ENCODE measurements at regions of chr5 and their contacts with region 1.

Region 1: GRCh38 chr5:135191084-135191826 is 157.2 kb upstream of the PITX1 start:
- DNase-seq: peak; percentile 62 to 80
- ATAC-seq: peak; percentile 97 to 99
- H3K4me3 ChIP-seq: peak overlapping the region; percentile 60
- H3K27ac ChIP-seq: peak overlapping the region; percentile 78 to 90
- H3K4me1 ChIP-seq: peaks cover 13% of the 10 kb centered on the region; the same call in 2 of the 3 replicates
- CTCF ChIP-seq: peak; percentile 94
- EP300 ChIP-seq: no peak
- POLR2A ChIP-seq: no peak
- RAD21 ChIP-seq: peak; percentile 97 to 99

Region 2: DNA sequence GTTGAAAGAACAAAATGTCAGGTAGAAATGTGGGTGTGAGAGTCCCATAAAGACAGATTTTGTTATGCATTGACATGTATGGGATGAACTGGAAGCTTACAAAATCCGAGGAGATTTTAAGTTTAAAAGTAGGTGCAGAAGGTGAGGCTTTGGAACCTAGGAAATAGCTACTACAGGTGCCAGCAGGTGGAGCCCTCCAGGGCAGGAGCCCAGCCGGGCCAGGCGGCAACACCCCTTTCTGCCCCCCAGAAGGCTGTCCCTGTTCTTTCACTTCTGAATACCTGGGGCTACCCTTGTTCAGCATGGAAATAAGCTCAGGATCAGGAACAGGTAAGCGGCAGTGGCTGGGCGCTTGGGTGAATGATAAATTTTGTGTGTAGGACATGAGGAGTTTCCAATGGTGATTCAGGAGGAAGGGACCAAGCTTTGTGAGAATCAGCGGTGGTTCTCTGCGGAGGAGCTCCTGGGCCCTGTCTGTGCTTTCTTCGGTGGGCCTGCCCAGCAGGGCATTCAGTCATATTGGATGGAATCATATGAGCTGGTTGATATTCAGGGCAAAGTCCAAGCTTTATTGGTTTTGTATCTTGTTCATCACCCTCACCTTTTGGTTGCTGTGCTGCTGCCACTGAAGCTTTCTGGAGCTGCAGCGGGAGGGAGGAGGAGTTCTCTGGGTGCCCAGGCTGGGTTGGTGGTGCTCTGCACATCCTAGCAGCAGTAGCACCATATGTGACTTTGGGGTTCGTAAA is 274.0 kb before region 1 on chr5:
- CTCF ChIA-PET with region 1: interaction called, 60 read pairs
- POLR2A ChIA-PET with region 1: no interaction called
- DNase-seq: peak in 1 of 2 experiments; percentile 16
- ATAC-seq: peak in 1 of 2 experiments; percentile 74; a peak in 3 of 6 replicates
- H3K4me3 ChIP-seq: no peak overlapping the region
- H3K27ac ChIP-seq: no peak overlapping the region
- H3K4me1 ChIP-seq: no peaks in the 10 kb centered on the region
- CTCF ChIP-seq: peak; percentile 46
- EP300 ChIP-seq: no peak
- POLR2A ChIP-seq: no peak
- RAD21 ChIP-seq: peak; percentile 40 to 50; a peak in 4 of 5 replicates

Region 3: DNA sequence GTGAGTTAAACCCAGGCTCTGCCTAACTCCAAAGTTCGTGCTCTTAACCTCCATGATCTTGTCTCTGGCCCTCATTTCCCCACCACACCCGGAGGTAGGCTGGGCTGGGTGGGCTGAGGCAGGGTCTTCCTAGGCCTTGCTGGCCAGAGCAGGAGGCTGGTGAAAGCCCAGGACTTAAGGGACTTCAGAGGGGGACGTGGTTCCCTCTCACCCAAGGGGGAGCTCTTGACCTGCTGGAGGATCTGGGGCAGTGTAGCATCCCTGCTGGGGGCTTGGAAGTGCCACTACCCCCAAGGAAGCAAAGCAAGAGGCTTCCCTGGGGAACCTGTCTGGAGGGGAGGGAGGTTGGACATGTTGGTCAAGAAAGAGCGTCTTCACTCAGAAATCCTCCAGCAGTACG is 171.9 kb before region 1 on chr5:
- CTCF ChIA-PET with region 1: interaction called, 29 read pairs
- POLR2A ChIA-PET with region 1: no interaction called
- DNase-seq: no peak
- ATAC-seq: peak in 1 of 2 experiments; percentile 55; a peak in 1 of 6 replicates
- H3K4me3 ChIP-seq: no peak overlapping the region
- H3K27ac ChIP-seq: no peak overlapping the region
- H3K4me1 ChIP-seq: no peaks in the 10 kb centered on the region
- CTCF ChIP-seq: no peak
- EP300 ChIP-seq: no peak
- POLR2A ChIP-seq: no peak
- RAD21 ChIP-seq: peak; percentile 27 to 47; a peak in 3 of 5 replicates

Region 4: DNA sequence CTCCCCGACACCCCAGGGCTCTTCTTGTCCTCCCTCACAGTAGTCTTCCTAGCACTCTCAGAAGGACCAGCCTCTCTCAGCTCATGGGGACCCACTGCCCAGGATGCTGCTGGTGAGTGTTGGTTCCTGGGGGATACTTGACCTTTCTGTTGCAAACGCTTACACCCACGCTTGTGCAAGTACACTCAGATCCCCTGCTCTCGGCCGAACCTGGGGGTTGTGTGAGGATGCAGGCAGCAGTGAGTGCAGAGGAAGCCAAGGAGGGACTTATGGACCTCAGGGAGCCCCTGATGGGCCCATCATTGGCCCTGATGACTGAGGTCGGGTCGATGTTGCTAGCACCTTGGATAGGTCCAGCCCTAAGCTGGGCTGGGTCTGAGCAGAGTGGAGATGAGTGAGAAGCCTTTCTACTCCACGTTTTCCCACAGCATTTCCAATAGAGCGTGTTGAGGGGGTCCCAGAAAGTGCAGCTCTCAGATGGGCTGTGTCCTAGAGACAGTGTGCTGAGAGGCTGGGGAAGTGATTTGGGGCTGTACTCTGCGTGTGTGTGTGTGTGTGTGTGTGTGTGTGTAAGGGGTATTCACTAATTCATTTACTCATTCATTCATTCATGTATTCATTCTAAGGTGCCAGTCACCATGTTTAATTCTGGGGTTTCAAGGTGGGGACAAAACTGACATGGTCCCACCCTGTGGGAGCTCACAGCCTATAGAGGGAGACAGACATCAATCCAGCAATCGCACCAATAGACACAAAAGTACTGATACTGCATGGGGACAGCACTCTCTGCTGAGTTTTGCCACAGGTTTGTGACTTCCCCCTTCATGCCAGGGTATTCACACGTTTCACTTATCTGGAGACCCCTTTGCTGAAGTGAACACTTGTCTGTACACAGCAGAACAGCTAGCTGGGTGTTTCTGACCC is 132.0 kb before region 1 on chr5:
- CTCF ChIA-PET with region 1: interaction called, 15 read pairs
- POLR2A ChIA-PET with region 1: no interaction called
- DNase-seq: no peak
- ATAC-seq: peak; percentile 28 to 57; a peak in 3 of 6 replicates
- H3K4me3 ChIP-seq: no peak overlapping the region
- H3K27ac ChIP-seq: no peak overlapping the region
- H3K4me1 ChIP-seq: no peaks in the 10 kb centered on the region
- CTCF ChIP-seq: 0 out of 3 replicates have a peak, but pooled peaks have one; percentile 17
- EP300 ChIP-seq: no peak
- POLR2A ChIP-seq: no peak
- RAD21 ChIP-seq: peak; percentile 25 to 36; a peak in 1 of 5 replicates

Region 5: GRCh38 chr5:135167634-135168033 is 23.6 kb before region 1 on chr5:
- CTCF ChIA-PET with region 1: interaction called, 11 read pairs
- POLR2A ChIA-PET with region 1: no interaction called
- DNase-seq: no peak
- ATAC-seq: no peak
- H3K4me3 ChIP-seq: no peak overlapping the region
- H3K27ac ChIP-seq: no peak overlapping the region
- H3K4me1 ChIP-seq: no peaks in the 10 kb centered on the region
- CTCF ChIP-seq: no peak
- EP300 ChIP-seq: no peak
- POLR2A ChIP-seq: no peak
- RAD21 ChIP-seq: no peak

Region 6: GRCh38 chr5:135208903-135209721 is 17.9 kb after region 1 on chr5:
- CTCF ChIA-PET with region 1: interaction called, 40 read pairs
- POLR2A ChIA-PET with region 1: no interaction called
- DNase-seq: peak; percentile 40 to 60
- ATAC-seq: peak; percentile 83 to 90
- H3K4me3 ChIP-seq: no peak overlapping the region
- H3K27ac ChIP-seq: peak overlapping the region; percentile 62 to 83
- H3K4me1 ChIP-seq: peaks cover 19% of the 10 kb centered on the region
- CTCF ChIP-seq: peak; percentile 38; the same call in 2 of the 3 replicates
- EP300 ChIP-seq: peak in 1 of 2 experiments; percentile 39; a peak in 1 of 5 replicates
- POLR2A ChIP-seq: no peak
- RAD21 ChIP-seq: peak; percentile 44 to 58; a peak in 4 of 5 replicates

Region 7: DNA sequence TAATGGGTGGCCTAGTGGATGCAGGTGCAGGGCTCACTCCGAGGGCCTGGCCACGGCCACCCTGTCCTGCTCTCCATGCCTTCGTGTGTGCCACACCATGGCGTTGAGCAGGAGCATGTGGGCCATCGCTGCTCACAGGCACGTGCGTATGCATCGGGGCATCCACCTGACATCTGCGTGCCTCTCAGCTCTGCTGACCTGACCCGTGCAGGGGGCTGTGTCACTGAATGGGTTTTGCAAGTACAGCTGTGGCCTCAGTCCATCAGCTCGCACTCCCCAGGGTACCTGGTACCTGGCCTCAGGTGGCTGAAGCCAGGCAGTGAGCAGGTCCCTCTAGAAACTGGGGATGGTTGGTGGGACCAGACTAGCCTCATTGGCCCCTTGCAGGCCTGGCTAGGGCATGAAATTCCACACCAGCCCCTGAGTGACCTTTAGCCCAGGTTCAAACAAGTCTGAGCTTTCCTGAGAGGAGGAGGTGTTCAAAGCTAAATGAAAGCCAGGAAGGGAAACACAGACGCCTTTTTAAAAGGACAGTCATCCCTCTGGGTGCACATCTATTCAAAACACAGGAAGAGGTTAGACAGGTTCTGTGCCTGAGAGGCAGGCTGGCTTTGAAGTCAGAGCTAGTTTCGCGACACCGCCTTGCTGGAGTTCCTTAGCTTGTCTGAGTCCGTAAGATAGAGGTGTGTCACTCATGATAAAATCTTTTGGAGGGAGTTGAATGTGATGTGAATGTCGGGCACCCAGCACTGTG is 133.8 kb after region 1 on chr5:
- CTCF ChIA-PET with region 1: interaction called, 99 read pairs
- POLR2A ChIA-PET with region 1: no interaction called
- DNase-seq: no peak
- ATAC-seq: no peak
- H3K4me3 ChIP-seq: no peak overlapping the region
- H3K27ac ChIP-seq: no peak overlapping the region
- H3K4me1 ChIP-seq: no peaks in the 10 kb centered on the region
- CTCF ChIP-seq: no peak
- EP300 ChIP-seq: no peak
- POLR2A ChIP-seq: no peak
- RAD21 ChIP-seq: no peak

Measured in A549 (cell line).